CD8-positive, alpha-beta T cell (primary cell): ENCODE measurements at regions of chr15 and their contacts with region 1.

Region 1: GRCh38 chr15:51971375-51972133 is at the start of gene LEO1:
- DNase-seq: peak; percentile 72 to 97 (median 88)
- ATAC-seq: peak; percentile 91
- H3K4me3 ChIP-seq: peak within 1 kb of the TSS; percentile 85 to 99
- H3K4me3 Mint-ChIP-seq: peak within 1 kb of the TSS; percentile 99
- H3K27ac ChIP-seq: peak within 1 kb of the TSS; percentile 69 to 87
- H3K27ac Mint-ChIP-seq: peak within 1 kb of the TSS; percentile 99
- H3K4me1 ChIP-seq: peaks cover 13% of the 10 kb centered on the region
- H3K4me1 Mint-ChIP-seq: peaks cover 21% of the 10 kb centered on the region
- H3K27me3 ChIP-seq: no peaks in the 10 kb centered on the region
- H3K27me3 Mint-ChIP-seq: no peaks in the 10 kb centered on the region
- CTCF ChIP-seq: peak; percentile 26
- total RNA-seq, gene LEO1: 9.4 TPM

Region 2: DNA sequence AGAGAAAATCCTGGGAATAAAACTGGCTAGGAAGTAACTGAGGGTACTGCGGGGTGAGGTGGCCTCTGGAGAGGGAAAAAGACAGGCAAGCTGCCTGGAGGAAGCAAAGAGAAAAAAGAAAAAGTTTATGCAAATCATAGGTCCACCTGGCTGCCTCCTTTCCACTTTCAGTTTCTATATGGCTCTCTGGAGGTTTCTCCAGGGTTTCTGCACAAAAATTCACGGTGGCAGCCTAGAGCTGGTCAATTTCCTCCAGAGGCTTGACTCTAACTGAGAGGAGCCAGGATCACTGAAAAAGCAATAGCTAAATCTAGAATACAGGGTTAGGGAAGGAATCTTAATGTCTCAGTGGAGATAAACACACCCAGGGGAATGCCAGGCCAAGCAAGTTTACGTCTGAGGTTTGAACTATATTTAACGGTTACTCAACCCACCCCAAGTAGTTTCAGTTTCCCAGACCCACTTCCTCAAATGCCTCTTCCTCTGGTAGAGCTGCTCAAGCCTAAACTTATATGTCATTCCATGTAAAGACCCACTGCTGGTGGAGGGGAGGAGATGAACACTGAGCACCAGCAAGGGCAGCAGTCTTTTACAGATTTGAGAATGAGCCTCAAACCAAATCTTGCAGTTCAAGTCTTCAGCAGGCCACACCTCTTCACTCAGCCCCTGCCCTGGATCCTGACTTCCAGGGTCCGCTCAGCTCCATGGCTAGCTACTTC is 239.8 kb before region 1 on chr15:
- CTCF ChIA-PET with region 1: no interaction called
- POLR2A ChIA-PET with region 1: no interaction called
- intact Hi-C with region 1: loop called in 1 of 2 experiments (anchors 5 kb)
- DNase-seq: peak in 6 of 9 experiments; percentile 26 to 89 (median 50)
- ATAC-seq: peak; percentile 65
- H3K4me3 ChIP-seq: peak overlapping the region; percentile 38 to 42
- H3K4me3 Mint-ChIP-seq: peak overlapping the region; percentile 93
- H3K27ac ChIP-seq: peak overlapping the region; percentile 60 to 92
- H3K27ac Mint-ChIP-seq: peak overlapping the region; percentile 99
- H3K4me1 ChIP-seq: peaks cover 72% of the 10 kb centered on the region
- H3K4me1 Mint-ChIP-seq: peaks cover 92% of the 10 kb centered on the region
- H3K27me3 ChIP-seq: no peaks in the 10 kb centered on the region
- H3K27me3 Mint-ChIP-seq: no peaks in the 10 kb centered on the region
- CTCF ChIP-seq: no peak

Region 3: GRCh38 chr15:51874751-51875528 is 96.6 kb before region 1 on chr15:
- CTCF ChIA-PET with region 1: no interaction called
- POLR2A ChIA-PET with region 1: no interaction called
- intact Hi-C with region 1: no loop called
- DNase-seq: no peak
- ATAC-seq: no peak
- H3K4me3 ChIP-seq: no peak overlapping the region
- H3K4me3 Mint-ChIP-seq: no peak overlapping the region
- H3K27ac ChIP-seq: no peak overlapping the region
- H3K27ac Mint-ChIP-seq: no peak overlapping the region
- H3K4me1 ChIP-seq: no peaks in the 10 kb centered on the region
- H3K4me1 Mint-ChIP-seq: peaks cover 21% of the 10 kb centered on the region
- H3K27me3 ChIP-seq: no peaks in the 10 kb centered on the region
- H3K27me3 Mint-ChIP-seq: no peaks in the 10 kb centered on the region
- CTCF ChIP-seq: no peak

Region 4: GRCh38 chr15:52050416-52050815 is 78.9 kb after region 1 on chr15:
- CTCF ChIA-PET with region 1: interaction called, 6 read pairs
- POLR2A ChIA-PET with region 1: interaction called, 8 read pairs
- intact Hi-C with region 1: loop called in 1 of 2 experiments (anchors 1 kb)
- DNase-seq: no peak
- ATAC-seq: no peak
- H3K4me3 ChIP-seq: no peak overlapping the region
- H3K4me3 Mint-ChIP-seq: no peak overlapping the region
- H3K27ac ChIP-seq: no peak overlapping the region
- H3K27ac Mint-ChIP-seq: no peak overlapping the region
- H3K4me1 ChIP-seq: peaks cover 10% of the 10 kb centered on the region
- H3K4me1 Mint-ChIP-seq: peaks cover 24% of the 10 kb centered on the region
- H3K27me3 ChIP-seq: no peaks in the 10 kb centered on the region
- H3K27me3 Mint-ChIP-seq: no peaks in the 10 kb centered on the region
- CTCF ChIP-seq: no peak

Region 5: GRCh38 chr15:52261498-52262242 is 290.1 kb after region 1 on chr15:
- CTCF ChIA-PET with region 1: no interaction called
- POLR2A ChIA-PET with region 1: no interaction called
- intact Hi-C with region 1: no loop called
- DNase-seq: peak in 7 of 9 experiments; percentile 8 to 71 (median 33)
- ATAC-seq: peak; percentile 87
- H3K4me3 ChIP-seq: peak overlapping the region in 1 of 2 experiments; percentile 9
- H3K4me3 Mint-ChIP-seq: peak overlapping the region; percentile 54
- H3K27ac ChIP-seq: peak overlapping the region in 1 of 2 experiments; percentile 67
- H3K27ac Mint-ChIP-seq: peak overlapping the region; percentile 75
- H3K4me1 ChIP-seq: peaks cover 39% of the 10 kb centered on the region
- H3K4me1 Mint-ChIP-seq: peaks cover 44% of the 10 kb centered on the region
- H3K27me3 ChIP-seq: no peaks in the 10 kb centered on the region
- H3K27me3 Mint-ChIP-seq: no peaks in the 10 kb centered on the region
- CTCF ChIP-seq: no peak